Heart right ventricle (tissue), 16 donors: ENCODE measurements at regions of chr15 and their contacts with region 1.

Region 1: GRCh38 chr15:93141371-93141794 is 52.4 kb upstream of the RGMA start:
- DNase-seq: no peak
- ATAC-seq: peak in 1 of 8 donors; percentile 29
- H3K4me3 ChIP-seq: no peak overlapping the region
- H3K27ac ChIP-seq: peak overlapping the region in 1 of 10 donors; percentile 29
- H3K4me1 ChIP-seq: peaks cover 0 to 3% (median 0%) of the 10 kb centered on the region in 9 donors
- H3K27me3 ChIP-seq: no peaks in the 10 kb centered on the region
- CTCF ChIP-seq: no peak

Region 2: DNA sequence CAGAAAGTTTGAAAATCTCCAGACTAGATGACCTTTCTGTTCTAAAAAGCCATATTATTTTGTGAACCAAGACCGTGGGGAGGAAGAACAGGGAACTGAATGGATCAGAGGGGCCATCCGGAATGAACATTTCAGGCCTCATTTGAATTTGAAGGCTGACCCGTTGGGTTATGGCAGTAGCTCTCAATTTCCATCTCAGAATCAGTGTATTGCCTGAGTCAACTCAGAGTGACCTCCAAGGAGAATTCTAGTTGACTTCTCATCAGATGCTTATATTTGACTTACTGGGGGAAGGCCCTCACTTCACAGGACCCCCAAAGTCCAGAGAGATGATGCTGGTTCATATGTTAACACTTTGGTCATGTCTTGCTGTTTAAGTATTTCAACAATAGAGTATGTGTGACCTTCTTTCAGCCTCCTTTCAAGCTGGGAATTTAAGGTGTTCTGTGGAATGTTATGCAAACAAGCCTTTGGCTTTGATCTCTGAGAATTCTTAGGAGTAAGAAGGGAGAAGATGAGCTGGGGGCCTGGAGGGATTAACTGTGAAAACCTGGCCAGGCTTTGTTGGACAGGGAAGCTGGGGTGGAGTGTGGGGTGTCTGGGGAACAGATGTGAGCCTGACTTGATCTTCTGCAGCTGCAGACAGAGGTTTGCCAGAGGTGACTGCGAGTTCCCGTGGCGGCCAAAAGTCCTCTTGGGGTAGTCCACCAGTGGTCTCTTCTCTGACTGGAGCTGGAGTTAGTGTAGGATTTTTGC is 58.9 kb after region 1 on chr15:
- intact Hi-C with region 1: loop called in 1 of 10 experiments (anchors 10 kb)
- DNase-seq: no peak
- ATAC-seq: peak in 2 of 8 donors; percentile 29 to 44
- H3K4me3 ChIP-seq: no peak overlapping the region
- H3K27ac ChIP-seq: no peak overlapping the region
- H3K4me1 ChIP-seq: peaks cover 0 to 13% (median 3%) of the 10 kb centered on the region in 9 donors
- H3K27me3 ChIP-seq: no peaks in the 10 kb centered on the region
- CTCF ChIP-seq: no peak

Region 3: DNA sequence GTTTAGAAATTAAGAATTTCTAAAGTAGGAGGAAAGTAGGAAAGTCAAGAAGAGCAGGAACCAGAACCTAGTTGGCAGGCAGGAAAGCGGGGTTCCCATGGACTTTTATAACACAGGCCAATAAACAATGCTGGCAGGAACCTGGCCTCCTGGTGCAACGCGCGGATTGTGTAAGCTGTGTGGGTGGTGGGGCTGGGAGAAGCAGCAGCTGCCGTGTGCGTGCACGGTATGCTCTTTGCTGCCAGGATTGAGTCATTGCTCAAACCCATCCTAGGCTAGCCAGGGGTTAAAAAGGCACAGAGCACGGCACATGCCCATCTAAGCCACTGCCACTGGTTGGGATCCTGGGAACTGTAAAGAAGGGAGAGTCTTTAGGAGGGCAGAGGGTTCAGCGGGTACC is 157.5 kb after region 1 on chr15:
- intact Hi-C with region 1: no loop called
- DNase-seq: no peak
- ATAC-seq: peak in 1 of 8 donors; percentile 77
- H3K4me3 ChIP-seq: no peak overlapping the region
- H3K27ac ChIP-seq: no peak overlapping the region
- H3K4me1 ChIP-seq: peaks cover 0 to 6% (median 0%) of the 10 kb centered on the region in 9 donors
- H3K27me3 ChIP-seq: no peaks in the 10 kb centered on the region
- CTCF ChIP-seq: no peak